Activated CD4-positive, alpha-beta T cell treated with anti-CD3 and anti-CD28 coated beads, Interleukin-2, amount 10 ng/mL, durations not matched to agents 24 days and 14 days (primary cell): ENCODE measurements at regions of chrX and their contacts with region 1.

Region 1: DNA sequence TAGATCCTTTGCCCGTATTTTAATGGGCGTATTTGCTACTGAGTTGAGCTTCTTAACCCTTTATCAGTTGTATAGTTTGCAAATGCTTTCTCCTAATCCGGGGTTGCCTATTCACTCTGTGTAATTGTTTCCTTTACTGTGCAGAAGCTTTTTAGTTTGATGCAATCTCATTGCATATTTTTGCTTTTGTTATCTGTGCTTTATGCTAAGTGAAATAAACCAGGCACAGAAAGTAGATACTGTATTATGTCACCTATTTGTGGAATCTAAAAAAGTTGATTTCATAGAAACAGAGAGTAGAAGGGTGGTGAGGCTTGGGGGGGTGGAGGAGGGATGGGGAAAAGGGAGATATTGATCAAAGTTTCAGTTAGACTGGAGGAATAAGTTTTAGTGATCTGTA is 17.7 kb downstream of the OGT start:
- DNase-seq: no peak
- H3K4me3 Mint-ChIP-seq: no peak overlapping the region
- H3K27ac Mint-ChIP-seq: peak overlapping the region; percentile 71
- H3K4me1 Mint-ChIP-seq: peaks cover 7% of the 10 kb centered on the region
- H3K27me3 Mint-ChIP-seq: no peaks in the 10 kb centered on the region

Region 2: GRCh38 chrX:71400710-71401109 is 149.9 kb before region 1 on chrX:
- intact Hi-C with region 1: loop called (anchors 10 kb)
- DNase-seq: no peak
- H3K4me3 Mint-ChIP-seq: no peak overlapping the region
- H3K27ac Mint-ChIP-seq: peak overlapping the region; percentile 46
- H3K4me1 Mint-ChIP-seq: no peaks in the 10 kb centered on the region
- H3K27me3 Mint-ChIP-seq: no peaks in the 10 kb centered on the region